AG04450 (cell line): ENCODE measurements at regions of chr4 and their contacts with region 1.

Region 1: DNA sequence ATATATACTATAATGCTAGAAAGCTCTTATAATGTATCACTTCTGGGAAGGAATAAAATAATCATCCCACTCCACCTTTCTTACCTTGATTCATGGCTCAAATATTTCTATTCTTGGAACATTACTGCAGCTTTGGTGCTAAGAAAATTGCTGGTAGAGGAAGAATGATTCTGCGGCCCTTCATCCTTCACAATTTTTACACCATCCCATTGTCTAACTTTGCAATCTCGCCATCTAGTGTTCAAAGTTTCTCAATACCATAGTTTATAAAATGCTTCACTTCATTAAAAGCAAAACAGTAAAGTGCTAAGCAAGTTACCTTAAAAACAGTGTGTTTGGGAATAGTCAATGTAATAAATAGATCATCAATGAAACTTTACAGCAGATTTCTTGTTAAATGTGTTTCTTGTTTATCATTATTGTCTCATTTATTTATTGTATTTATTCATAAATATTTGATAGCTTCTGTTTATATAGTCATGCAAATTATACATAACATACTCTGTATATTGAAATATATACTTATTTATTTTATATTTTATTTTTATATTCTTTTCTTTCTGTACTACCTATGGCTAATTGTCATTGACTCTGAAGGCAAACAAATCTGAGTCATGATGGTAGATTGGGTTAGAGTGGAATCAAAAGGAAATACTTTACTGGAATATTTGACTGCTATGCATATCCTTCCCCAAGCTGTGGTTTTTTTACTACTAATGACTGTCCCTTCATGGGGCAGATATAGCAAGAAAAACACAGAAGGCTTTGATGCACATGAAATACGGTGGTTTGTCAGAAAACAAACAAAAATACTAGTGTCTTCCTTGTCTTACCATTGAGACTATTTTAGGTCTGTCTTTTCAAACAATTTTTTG is 390.7 kb downstream of the MAPK10 start:
- DNase-seq: peak; percentile 15
- H3K4me3 ChIP-seq: no peak overlapping the region
- H3K27ac ChIP-seq: no peak overlapping the region
- H3K27me3 ChIP-seq: no peaks in the 10 kb centered on the region
- CTCF ChIP-seq: peak; percentile 67

Region 2: GRCh38 chr4:85761803-85762528 is 207.2 kb before region 1 on chr4:
- CTCF ChIA-PET with region 1: interaction called, 34 read pairs
- POLR2A ChIA-PET with region 1: no interaction called
- DNase-seq: peak; percentile 52
- H3K4me3 ChIP-seq: peak overlapping the region; percentile 11; the same call in 1 of the 2 replicates
- H3K27ac ChIP-seq: peak overlapping the region; percentile 79
- H3K27me3 ChIP-seq: no peaks in the 10 kb centered on the region
- CTCF ChIP-seq: no peak

Region 3: DNA sequence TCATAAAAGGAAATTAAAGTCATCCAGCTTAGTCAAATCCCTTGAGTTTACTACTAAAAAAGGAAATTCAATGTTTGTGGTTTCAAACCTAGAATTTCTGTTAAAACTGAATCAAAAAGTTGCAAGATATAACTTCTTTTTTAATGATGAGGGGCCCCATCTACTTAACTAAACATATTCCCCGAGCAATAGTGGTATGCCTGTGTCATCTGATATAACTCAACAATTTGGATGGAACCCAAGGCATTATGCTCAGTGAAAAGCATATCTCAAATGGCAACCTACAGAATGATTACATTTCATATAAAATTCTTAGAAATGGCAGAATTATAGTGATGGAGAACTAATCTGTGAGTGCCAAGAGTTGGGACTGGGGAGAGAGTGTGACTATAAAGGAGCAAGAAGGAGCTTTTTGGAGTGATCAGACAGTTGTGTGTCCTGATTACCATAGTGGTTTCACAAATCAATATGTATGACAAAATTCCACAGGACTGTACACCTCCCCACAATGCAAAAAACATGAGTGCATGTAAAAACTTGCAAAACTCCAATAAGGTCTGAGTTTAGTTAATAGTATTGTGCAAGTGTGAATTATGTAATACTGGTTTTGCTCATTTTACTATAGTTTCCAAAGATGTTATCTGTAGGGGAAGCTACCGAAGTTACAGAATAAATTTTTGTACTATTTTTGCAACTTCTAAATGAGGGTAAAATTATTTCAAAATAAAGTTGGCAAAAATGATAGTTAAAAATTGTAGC is 171.0 kb before region 1 on chr4:
- CTCF ChIA-PET with region 1: interaction called, 35 read pairs
- POLR2A ChIA-PET with region 1: no interaction called
- DNase-seq: no peak
- H3K4me3 ChIP-seq: no peak overlapping the region
- H3K27ac ChIP-seq: no peak overlapping the region
- H3K27me3 ChIP-seq: no peaks in the 10 kb centered on the region
- CTCF ChIP-seq: no peak

Region 4: DNA sequence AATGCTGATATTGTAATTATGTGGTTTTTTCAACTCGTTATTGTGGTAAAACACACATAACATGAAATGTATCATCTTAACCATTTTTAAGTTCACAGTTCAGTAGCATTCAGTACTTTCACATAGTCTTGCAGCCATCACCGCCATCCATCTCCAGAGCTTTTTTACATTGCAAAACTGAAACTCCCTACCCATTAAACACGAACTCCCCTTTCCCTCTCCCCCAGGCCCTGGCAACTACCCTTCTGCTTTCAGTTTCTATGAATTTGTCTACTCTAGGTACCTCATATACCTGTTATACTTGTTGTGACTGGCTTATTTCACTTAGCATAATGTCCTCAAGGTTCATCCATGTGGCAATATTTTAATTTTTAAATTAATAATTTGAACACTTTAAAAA is 10.1 kb after region 1 on chr4:
- CTCF ChIA-PET with region 1: interaction called, 10 read pairs
- POLR2A ChIA-PET with region 1: no interaction called
- DNase-seq: no peak
- H3K4me3 ChIP-seq: no peak overlapping the region
- H3K27ac ChIP-seq: no peak overlapping the region
- H3K27me3 ChIP-seq: no peaks in the 10 kb centered on the region
- CTCF ChIP-seq: no peak

Region 5: GRCh38 chr4:86043755-86044592 is 74.8 kb after region 1 on chr4:
- CTCF ChIA-PET with region 1: interaction called, 10 read pairs
- POLR2A ChIA-PET with region 1: no interaction called
- DNase-seq: no peak
- H3K4me3 ChIP-seq: no peak overlapping the region
- H3K27ac ChIP-seq: no peak overlapping the region
- H3K27me3 ChIP-seq: no peaks in the 10 kb centered on the region
- CTCF ChIP-seq: peak; percentile 69

Region 6: DNA sequence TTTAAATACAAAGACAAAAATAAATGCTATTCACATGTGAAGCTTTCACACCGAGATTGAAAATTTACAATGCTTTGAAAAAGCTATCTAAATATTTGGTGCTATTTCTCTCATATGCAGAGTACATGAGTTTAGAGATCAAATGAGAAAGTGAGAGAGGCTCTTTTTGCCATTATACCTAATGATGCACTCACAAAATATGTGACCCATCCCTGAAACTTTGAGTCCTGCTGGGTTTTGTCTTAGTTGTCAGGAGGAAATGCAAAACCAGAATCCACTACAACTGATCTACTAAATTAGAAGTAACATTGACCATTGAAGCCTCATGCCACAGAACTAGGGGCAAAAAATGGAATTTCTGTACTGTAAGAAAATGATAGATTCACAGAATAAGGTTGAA is 139.0 kb after region 1 on chr4:
- CTCF ChIA-PET with region 1: no interaction called
- POLR2A ChIA-PET with region 1: no interaction called
- DNase-seq: no peak
- H3K4me3 ChIP-seq: no peak overlapping the region
- H3K27ac ChIP-seq: no peak overlapping the region
- H3K27me3 ChIP-seq: no peaks in the 10 kb centered on the region
- CTCF ChIP-seq: no peak

Region 7: DNA sequence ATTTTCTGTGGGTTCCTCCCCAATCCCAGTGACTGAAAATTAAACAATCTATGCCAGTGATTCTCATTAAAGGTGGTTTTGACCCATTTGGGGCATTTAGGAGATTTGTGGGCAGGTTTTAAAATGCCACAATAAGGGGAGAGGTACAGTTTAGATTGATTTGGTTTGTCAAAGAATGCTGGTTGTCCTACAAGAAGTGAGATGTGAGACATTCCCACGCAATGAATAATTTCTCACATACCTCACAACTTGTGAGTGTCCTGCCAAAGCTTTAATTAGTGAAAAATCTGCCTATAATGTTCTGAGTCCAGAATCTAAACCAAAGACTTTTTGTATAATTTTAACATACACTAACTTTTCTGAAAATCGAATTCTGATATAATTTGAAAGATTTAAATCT is 191.2 kb after region 1 on chr4:
- CTCF ChIA-PET with region 1: no interaction called
- POLR2A ChIA-PET with region 1: no interaction called
- DNase-seq: no peak
- H3K4me3 ChIP-seq: no peak overlapping the region
- H3K27ac ChIP-seq: no peak overlapping the region
- H3K27me3 ChIP-seq: no peaks in the 10 kb centered on the region
- CTCF ChIP-seq: no peak

Region 8: DNA sequence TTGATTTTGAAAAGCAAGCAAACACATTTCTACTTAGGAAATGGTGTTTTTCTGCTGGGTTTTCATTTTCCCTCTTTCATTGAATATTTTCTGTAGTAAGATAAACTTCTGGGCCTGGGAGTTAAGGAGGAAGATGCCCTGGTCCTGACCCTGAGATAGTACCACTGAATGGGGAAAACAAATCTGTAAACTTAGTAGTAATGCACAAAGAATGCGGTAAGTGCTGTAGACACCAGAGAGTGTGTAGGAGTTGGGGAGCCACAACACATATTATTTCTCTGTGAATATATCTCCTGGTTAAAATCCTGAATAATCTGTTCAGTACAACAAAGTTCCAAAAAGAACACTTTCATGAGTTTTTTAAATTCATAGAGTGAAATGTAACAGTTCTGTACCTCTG is 212.4 kb after region 1 on chr4:
- CTCF ChIA-PET with region 1: no interaction called
- POLR2A ChIA-PET with region 1: no interaction called
- DNase-seq: no peak
- H3K4me3 ChIP-seq: no peak overlapping the region
- H3K27ac ChIP-seq: no peak overlapping the region
- H3K27me3 ChIP-seq: no peaks in the 10 kb centered on the region
- CTCF ChIP-seq: no peak